CD4-positive, alpha-beta T cell (primary cell): ENCODE measurements at regions of chr13 and their contacts with region 1.

Region 1: GRCh38 chr13:77053192-77053591 is 26.2 kb upstream of the FBXL3 start:
- DNase-seq: no peak
- ATAC-seq: no peak
- H3K4me3 ChIP-seq: no peak overlapping the region
- H3K4me3 Mint-ChIP-seq: no peak overlapping the region
- H3K27ac ChIP-seq: no peak overlapping the region
- H3K27ac Mint-ChIP-seq: no peak overlapping the region
- H3K4me1 ChIP-seq: no peaks in the 10 kb centered on the region
- H3K4me1 Mint-ChIP-seq: no peaks in the 10 kb centered on the region
- H3K27me3 ChIP-seq: no peaks in the 10 kb centered on the region
- H3K27me3 Mint-ChIP-seq: no peaks in the 10 kb centered on the region
- CTCF ChIP-seq: no peak

Region 2: DNA sequence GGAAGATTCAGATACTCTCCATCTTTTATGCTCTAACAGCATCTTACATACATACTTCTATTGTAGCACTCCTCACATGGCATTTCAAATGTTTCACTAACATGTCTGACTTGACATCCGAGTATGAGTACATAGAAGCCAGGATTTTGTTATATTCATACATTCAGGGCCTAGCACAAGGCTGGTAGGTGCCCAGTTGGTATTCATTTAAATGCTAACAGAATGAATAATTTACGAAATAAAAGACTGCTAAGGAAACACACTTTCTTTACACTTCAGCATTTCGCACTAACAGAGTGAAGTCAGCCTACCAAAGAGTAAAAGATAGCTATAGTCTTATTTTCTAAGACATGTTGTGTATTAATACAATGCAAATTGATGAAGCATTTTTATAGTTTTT is 41.6 kb after region 1 on chr13:
- CTCF ChIA-PET with region 1: no interaction called
- POLR2A ChIA-PET with region 1: no interaction called
- intact Hi-C with region 1: loop called in 1 of 2 experiments (anchors 5 kb)
- DNase-seq: no peak
- ATAC-seq: no peak
- H3K4me3 ChIP-seq: no peak overlapping the region
- H3K4me3 Mint-ChIP-seq: no peak overlapping the region
- H3K27ac ChIP-seq: no peak overlapping the region
- H3K27ac Mint-ChIP-seq: no peak overlapping the region
- H3K4me1 ChIP-seq: no peaks in the 10 kb centered on the region
- H3K4me1 Mint-ChIP-seq: no peaks in the 10 kb centered on the region
- H3K27me3 ChIP-seq: no peaks in the 10 kb centered on the region
- H3K27me3 Mint-ChIP-seq: no peaks in the 10 kb centered on the region
- CTCF ChIP-seq: no peak

Region 3: DNA sequence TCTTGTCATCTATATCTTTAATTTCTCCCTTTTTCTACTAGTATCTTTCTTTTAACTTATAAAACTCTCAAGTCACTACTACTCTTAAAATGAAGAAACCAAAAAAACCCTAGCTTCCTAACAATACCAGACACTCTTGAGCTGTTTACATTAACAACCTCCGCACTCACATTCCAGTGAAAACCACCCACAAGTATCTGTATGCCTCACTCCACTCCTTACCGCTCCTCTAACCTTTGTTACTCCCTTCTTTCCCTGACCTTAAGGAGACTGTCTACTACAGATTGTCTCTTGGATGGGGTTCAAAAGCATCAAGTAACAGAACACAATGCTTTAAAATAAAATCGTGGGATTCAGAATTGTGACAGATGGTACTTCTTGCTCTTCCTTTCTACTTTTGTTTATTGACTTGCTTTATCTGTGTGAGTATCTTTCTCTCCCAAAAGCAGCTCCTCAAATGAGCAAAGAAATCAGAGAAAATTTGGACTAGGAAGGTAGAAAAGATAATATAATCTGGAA is 83.8 kb after region 1 on chr13:
- CTCF ChIA-PET with region 1: no interaction called
- POLR2A ChIA-PET with region 1: no interaction called
- intact Hi-C with region 1: no loop called
- DNase-seq: no peak
- ATAC-seq: no peak
- H3K4me3 ChIP-seq: no peak overlapping the region
- H3K4me3 Mint-ChIP-seq: no peak overlapping the region
- H3K27ac ChIP-seq: no peak overlapping the region
- H3K27ac Mint-ChIP-seq: no peak overlapping the region
- H3K4me1 ChIP-seq: no peaks in the 10 kb centered on the region
- H3K4me1 Mint-ChIP-seq: no peaks in the 10 kb centered on the region
- H3K27me3 ChIP-seq: no peaks in the 10 kb centered on the region
- H3K27me3 Mint-ChIP-seq: no peaks in the 10 kb centered on the region
- CTCF ChIP-seq: no peak